Transverse colon (tissue), 4 donors: ENCODE measurements at regions of chr14 and their contacts with region 1.

Region 1: DNA sequence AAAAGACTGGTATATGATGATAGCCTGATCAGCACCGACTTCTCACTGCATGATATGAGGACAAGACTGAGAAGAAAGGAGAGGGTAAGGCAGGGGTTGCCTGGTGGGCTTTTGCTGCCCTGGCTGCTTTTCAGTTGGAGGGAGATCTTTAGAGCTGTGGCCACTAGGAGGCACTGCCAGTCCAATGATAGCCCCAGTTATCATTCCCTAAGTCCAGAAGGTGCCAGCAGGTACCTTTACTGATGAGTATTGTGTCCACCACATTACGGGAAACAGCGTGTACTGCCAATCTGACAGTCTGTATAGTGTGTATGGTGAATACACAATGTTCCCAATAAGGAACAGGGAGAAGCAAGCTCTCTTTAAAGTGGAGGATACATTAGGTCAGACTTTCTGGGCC is 55.8 kb upstream of the CCDC175 start:
- DNase-seq: peak; percentile 30
- H3K4me3 ChIP-seq: no peak overlapping the region
- H3K27ac ChIP-seq: no peak overlapping the region
- H3K4me1 ChIP-seq: peaks cover 0 to 9% (median 5%) of the 10 kb centered on the region in 4 donors
- H3K27me3 ChIP-seq: peaks cover 38% of the 10 kb centered on the region
- CTCF ChIP-seq: peak; percentile 30 to 56 (median 45)
- EP300 ChIP-seq: no peak
- POLR2A ChIP-seq: no peak

Region 2: DNA sequence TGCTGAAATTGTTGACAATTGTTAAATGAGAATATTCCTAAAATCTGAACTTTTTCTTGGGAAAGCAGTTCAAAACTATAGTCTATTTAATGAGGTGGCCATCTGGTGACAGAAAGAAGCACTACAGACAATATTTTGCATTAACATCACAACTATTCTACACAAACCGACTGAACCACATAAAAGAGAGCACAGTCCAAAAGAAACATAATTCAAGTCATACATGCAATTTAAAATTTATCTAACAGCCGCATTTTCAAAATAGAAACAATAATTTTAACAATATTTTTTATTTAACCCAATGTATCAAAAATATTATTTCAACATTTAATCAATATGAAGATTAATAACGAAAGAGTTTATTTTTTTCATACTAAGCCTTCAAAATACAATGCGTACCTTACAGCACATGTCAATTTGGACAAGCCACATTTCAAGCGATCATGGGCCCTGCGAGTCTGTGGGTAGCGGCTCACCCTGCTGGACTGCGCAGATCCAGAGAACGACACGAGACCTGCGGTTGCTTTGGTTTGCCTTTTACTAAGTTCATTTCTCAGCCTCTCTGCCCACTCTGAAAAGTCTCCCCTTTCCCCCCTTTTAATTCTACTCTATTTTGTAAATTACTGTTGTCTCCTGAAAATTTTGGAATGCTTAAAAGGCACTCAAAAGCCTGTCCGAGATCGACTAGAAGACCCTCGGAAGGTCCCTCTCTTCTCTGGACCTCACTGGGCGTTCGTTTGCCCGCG is 286.6 kb after region 1 on chr14:
- in situ Hi-C with region 1: loop called in 1 of 4 experiments (anchors 25 kb)
- intact Hi-C with region 1: no loop called
- DNase-seq: peak; percentile 12
- H3K4me3 ChIP-seq: peak overlapping the region in 3 of 4 donors; percentile 1 to 36 (median 21)
- H3K27ac ChIP-seq: no peak overlapping the region
- H3K4me1 ChIP-seq: peaks cover 9 to 15% (median 14%) of the 10 kb centered on the region in 4 donors
- H3K27me3 ChIP-seq: peaks cover 46% of the 10 kb centered on the region
- CTCF ChIP-seq: peak in 4 of 5 experiments; percentile 32 to 42 (median 36)
- EP300 ChIP-seq: no peak
- POLR2A ChIP-seq: no peak